Tibial artery (tissue), 4 donors: ENCODE measurements at regions of chr15 and their contacts with region 1.

Region 1: GRCh38 chr15:89051875-89052274 is 36.4 kb upstream of the ABHD2 start:
- DNase-seq: no peak
- H3K4me3 ChIP-seq: no peak overlapping the region
- H3K27ac ChIP-seq: peak overlapping the region; percentile 84
- H3K4me1 ChIP-seq: peaks cover 0 to 73% (median 24%) of the 10 kb centered on the region in 4 donors
- H3K27me3 ChIP-seq: no peaks in the 10 kb centered on the region
- CTCF ChIP-seq: no peak

Region 2: GRCh38 chr15:88954431-88955277 is 97.2 kb before region 1 on chr15:
- intact Hi-C with region 1: no loop called
- DNase-seq: peak; percentile 68 to 94
- H3K4me3 ChIP-seq: no peak overlapping the region
- H3K27ac ChIP-seq: peak overlapping the region; percentile 81 to 83
- H3K4me1 ChIP-seq: peaks cover 5 to 20% (median 13%) of the 10 kb centered on the region in 4 donors
- H3K27me3 ChIP-seq: no peaks in the 10 kb centered on the region
- CTCF ChIP-seq: no peak

Region 3: DNA sequence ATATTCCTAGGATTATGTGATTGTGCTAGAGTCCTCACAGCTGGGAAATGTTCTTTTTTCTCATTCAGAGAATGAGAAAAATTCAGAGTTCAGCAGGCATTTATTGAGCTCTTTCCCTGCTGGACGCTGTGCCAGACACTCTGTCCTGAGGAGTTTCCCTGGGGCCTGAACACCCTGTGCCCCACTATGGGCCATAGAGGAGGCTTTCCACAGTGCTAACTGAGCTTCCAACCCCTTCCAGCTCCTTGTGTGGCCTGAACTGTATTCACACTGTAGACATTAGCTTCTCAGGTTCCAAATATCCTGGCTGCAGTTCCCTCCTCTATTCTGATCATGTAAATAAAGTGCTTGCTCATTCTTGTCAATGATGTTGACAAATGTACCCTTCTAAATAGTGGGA is 46.4 kb after region 1 on chr15:
- intact Hi-C with region 1: loop called (anchors 2 kb)
- DNase-seq: peak in 1 of 2 donors; percentile 63
- H3K4me3 ChIP-seq: no peak overlapping the region
- H3K27ac ChIP-seq: peak overlapping the region; percentile 90 to 98
- H3K4me1 ChIP-seq: peaks cover 0 to 100% (median 67%) of the 10 kb centered on the region in 4 donors
- H3K27me3 ChIP-seq: no peaks in the 10 kb centered on the region
- CTCF ChIP-seq: no peak